Motor neuron (in vitro differentiated cells): ENCODE measurements at regions of chr13 and their contacts with region 1.

Region 1: DNA sequence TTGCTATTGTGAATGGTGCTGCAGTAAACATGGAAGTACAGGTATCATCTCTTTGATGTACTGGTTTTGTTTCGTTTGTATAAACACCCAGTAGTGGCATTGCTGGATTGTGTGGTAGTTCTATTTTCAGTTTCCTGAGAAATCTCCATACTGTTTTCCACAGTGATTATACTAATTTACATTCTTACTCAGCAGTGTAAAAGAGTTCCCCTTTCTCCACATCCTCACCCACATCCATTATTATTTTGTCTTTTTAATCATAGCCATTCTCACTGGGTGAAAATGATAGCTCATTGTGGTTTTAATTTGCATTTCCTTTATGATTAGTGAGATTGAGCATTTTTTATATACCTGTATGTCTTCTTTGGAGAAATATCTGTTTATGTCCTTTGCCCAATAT is 62.3 kb upstream of the PARP4 start:
- ATAC-seq: peak in 2 of 8 experiments; percentile 83 to 88
- H3K4me3 ChIP-seq: no peak overlapping the region
- H3K27ac ChIP-seq: no peak overlapping the region
- H3K4me1 ChIP-seq: no peaks in the 10 kb centered on the region

Region 2: GRCh38 chr13:24671386-24672107 is 96.7 kb after region 1 on chr13:
- in situ Hi-C with region 1: loop called in 1 of 9 experiments (anchors 10 kb)
- ATAC-seq: peak; percentile 58 to 86 (median 74)
- H3K4me3 ChIP-seq: no peak overlapping the region
- H3K27ac ChIP-seq: no peak overlapping the region
- H3K4me1 ChIP-seq: peaks cover 11 to 23% of the 10 kb centered on the region in 2 donors

Region 3: DNA sequence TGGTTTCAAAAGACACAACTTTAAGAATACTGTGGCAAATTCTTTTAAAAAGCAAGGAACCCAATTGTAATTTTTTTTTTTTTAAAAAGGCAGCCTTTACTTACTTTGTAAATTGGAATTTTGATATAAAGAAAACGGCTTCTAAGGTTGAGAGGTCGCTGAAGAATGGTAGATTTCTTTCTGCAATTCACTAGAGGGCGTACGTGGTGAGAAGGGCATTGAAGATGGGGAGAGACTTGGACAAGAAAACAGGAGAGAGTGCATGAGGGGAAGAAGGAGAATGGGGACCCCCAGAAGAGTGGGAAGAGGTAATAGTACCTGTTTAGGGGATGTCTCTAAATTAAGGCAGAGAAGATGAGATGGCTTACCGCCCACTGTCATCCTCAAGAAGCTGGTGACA is 487.6 kb after region 1 on chr13:
- in situ Hi-C with region 1: no loop called
- ATAC-seq: no peak
- H3K4me3 ChIP-seq: no peak overlapping the region
- H3K27ac ChIP-seq: no peak overlapping the region
- H3K4me1 ChIP-seq: no peaks in the 10 kb centered on the region